ENCODE measurements at regions of chr5 and their contacts with region 1.

Region 1: DNA sequence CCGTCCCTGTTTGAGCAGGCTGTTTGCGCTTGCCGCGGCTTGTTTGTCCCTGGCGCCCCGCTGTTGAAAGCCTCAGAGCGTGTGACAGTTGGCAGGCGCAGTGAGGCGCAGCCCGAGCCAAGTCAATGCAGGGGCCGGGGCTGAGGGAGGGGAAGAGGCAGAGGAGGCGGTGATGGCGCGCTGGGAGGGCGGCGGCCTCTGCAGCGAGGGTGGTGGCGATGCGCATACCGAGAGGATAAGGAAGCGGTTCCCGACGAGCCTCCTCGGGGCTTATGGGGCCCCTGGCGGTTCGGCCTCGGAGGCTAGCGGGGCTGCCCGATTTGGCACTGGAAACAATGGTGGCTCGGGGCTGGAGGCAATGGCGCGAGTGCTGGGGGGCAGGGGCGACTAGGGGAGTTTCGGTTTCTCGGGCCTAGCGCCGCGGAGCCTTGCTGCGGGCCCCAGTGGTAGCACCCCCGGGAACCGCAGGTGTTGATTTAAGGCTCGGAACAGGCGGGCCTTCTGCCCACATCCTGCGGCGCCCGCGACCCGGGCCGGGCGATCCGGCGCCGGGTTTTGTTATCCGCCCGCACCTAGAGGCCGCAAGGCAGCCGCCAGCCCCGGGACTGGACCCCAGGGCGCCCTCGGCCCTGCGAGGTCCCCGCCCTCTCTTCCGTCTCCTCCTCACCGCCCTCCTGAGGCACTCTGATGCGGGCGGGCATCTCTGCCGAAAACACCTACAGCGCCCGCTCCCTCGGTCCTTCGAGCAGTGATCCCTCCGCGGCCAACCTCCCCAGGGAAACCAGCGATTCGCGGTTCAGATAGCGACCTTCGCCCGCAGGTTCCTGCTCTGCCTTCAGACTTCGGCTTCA is 947 bp upstream of the LNPEP start:
- DNase-seq: peak; percentile 95
- H3K4me3 ChIP-seq: peak overlapping the region; percentile 93 to 95 (median 94)
- H3K27ac ChIP-seq: peak overlapping the region; percentile 91 to 99 (median 98)
- H3K4me1 ChIP-seq: peaks cover 10 to 42% (median 30%) of the 10 kb centered on the region in 4 donors
- H3K27me3 ChIP-seq: no peaks in the 10 kb centered on the region
- CTCF ChIP-seq: peak in 2 of 4 experiments; percentile 13 to 19
- EP300 ChIP-seq: peak in 2 of 4 donors; percentile 33 to 40
- POLR2A ChIP-seq: peak in 1 of 2 donors; percentile 3

Region 2: GRCh38 chr5:96702503-96703383 is 232.2 kb before region 1 on chr5:
- intact Hi-C with region 1: loop called (anchors 5 kb)
- DNase-seq: peak; percentile 98
- H3K4me3 ChIP-seq: peak overlapping the region; percentile 57 to 69 (median 63)
- H3K27ac ChIP-seq: peak overlapping the region; percentile 88 to 93 (median 90)
- H3K4me1 ChIP-seq: peaks cover 0 to 32% (median 20%) of the 10 kb centered on the region in 4 donors
- H3K27me3 ChIP-seq: no peaks in the 10 kb centered on the region
- CTCF ChIP-seq: no peak
- EP300 ChIP-seq: peak in 3 of 4 donors; percentile 37 to 95 (median 69)
- POLR2A ChIP-seq: peak; percentile 63 to 71

Region 3: DNA sequence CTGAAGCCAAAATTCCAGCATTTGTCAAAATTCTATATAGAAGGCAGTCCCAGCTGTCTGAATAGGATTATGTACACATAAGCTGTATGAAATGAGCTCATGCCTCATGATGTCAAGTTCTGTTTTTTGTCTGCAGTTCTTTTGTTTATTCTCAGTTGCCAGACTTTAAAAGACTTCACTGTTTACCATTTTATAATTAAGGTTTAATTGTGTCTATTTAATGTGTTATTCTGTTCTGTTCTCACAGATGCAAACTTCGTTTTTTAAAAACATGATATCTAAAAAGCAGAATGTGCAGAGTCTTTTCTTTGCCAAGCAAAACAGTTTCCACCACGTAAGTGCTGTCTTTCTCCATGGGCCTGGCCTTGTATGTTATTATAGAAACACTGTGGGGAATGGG is 158.3 kb before region 1 on chr5:
- intact Hi-C with region 1: no loop called
- DNase-seq: no peak
- H3K4me3 ChIP-seq: no peak overlapping the region
- H3K27ac ChIP-seq: peak overlapping the region in 3 of 4 donors; percentile 62 to 74 (median 71)
- H3K4me1 ChIP-seq: peaks cover 0 to 65% (median 50%) of the 10 kb centered on the region in 4 donors
- H3K27me3 ChIP-seq: no peaks in the 10 kb centered on the region
- CTCF ChIP-seq: no peak
- EP300 ChIP-seq: peak in 2 of 4 donors; percentile 4 to 28
- POLR2A ChIP-seq: no peak

Region 4: GRCh38 chr5:96876292-96876850 is 58.6 kb before region 1 on chr5 and contains the start of gene ERAP2:
- intact Hi-C with region 1: loop called (anchors 5 kb)
- DNase-seq: no peak
- H3K4me3 ChIP-seq: peak within 1 kb of the TSS; percentile 59 to 66 (median 62)
- H3K27ac ChIP-seq: peak within 1 kb of the TSS; percentile 70 to 78 (median 74)
- H3K4me1 ChIP-seq: peaks cover 0 to 15% (median 3%) of the 10 kb centered on the region in 4 donors
- H3K27me3 ChIP-seq: no peaks in the 10 kb centered on the region
- CTCF ChIP-seq: no peak
- EP300 ChIP-seq: no peak
- POLR2A ChIP-seq: no peak
- total RNA-seq, gene ERAP2: 7.7 to 10.7 (median 8.2) TPM

Region 5: GRCh38 chr5:97026721-97027120 is 91.8 kb after region 1 on chr5:
- intact Hi-C with region 1: no loop called
- DNase-seq: no peak
- H3K4me3 ChIP-seq: no peak overlapping the region
- H3K27ac ChIP-seq: no peak overlapping the region
- H3K4me1 ChIP-seq: peaks cover 0 to 12% (median 5%) of the 10 kb centered on the region in 4 donors
- H3K27me3 ChIP-seq: no peaks in the 10 kb centered on the region
- CTCF ChIP-seq: no peak
- EP300 ChIP-seq: no peak
- POLR2A ChIP-seq: no peak

Region 6: DNA sequence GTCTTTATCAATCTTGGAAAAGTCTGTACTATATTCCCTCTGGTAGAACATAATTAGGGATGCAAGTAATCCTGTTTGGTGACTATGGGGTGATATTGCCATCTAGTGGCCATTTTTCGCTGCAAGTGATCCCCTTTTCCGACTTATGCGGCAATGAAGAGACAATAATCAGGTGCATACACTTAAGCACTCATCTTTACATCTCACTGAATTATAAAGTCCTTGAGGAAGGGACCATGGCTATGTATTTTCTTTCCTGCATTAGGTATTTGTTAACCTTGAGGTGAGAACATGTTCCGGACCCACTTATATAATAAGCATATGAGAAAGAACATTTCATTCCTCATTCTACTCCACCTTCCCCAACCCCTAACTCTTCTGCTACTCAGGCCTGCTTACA is 227.1 kb after region 1 on chr5:
- intact Hi-C with region 1: loop called (anchors 5 kb)
- DNase-seq: peak; percentile 76
- H3K4me3 ChIP-seq: no peak overlapping the region
- H3K27ac ChIP-seq: no peak overlapping the region
- H3K4me1 ChIP-seq: no peaks in the 10 kb centered on the region
- H3K27me3 ChIP-seq: no peaks in the 10 kb centered on the region
- CTCF ChIP-seq: peak; percentile 78 to 91 (median 81)
- EP300 ChIP-seq: no peak
- POLR2A ChIP-seq: no peak

Region 7: DNA sequence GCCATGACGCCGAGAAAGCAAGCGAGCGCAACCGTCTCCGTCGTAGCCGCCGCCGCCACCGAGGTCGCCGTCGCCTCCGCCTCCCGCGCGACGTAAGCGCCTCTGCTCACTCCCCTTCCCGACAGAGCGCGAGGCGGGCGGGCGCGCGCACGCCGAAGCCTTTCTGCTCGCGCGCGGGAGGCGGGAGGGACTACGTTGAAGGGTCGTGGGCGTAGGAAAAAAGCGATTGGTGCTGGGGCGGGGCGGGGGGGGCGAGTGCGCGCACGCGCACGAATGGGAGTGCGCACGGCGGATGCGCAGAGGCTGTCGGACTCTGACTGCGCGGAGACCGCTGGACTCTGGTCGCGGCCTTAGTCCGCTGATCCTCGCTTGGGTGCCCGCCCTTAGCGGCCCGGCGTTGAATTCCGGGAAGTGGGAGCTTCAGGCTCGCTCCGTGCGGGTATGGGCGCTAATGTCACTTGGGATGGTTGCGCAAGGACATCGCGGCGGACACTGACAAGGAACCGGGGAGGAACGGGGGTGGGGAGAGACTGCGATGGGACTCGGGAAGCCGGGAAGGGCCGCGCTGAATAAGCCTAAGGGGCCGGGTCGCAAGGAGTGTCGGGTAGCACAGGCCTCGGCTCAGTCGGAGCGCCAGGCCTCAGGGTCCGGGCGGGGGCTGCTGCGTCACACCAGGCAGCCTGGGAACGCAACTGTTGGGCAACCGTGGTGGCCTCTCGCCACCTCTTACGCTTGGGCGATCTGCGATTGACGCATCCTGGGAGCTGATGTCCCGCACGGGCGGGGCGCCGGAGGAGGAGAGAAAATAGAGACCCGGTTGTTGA is 1994.2 kb after region 1 on chr5 and contains the start of gene CHD1:
- intact Hi-C with region 1: loop called (anchors 2 kb)
- DNase-seq: peak; percentile 98
- H3K4me3 ChIP-seq: peak within 1 kb of the TSS; percentile 78 to 86 (median 84)
- H3K27ac ChIP-seq: peak within 1 kb of the TSS; percentile 99 to 100 (median 100)
- H3K4me1 ChIP-seq: peaks cover 0 to 44% (median 26%) of the 10 kb centered on the region in 4 donors
- H3K27me3 ChIP-seq: no peaks in the 10 kb centered on the region
- CTCF ChIP-seq: no peak
- EP300 ChIP-seq: peak; percentile 12 to 91 (median 80)
- POLR2A ChIP-seq: peak; percentile 96 to 97
- total RNA-seq, gene CHD1: 38.2 to 73.3 (median 52.4) TPM

Measured in sigmoid colon (tissue), 7 donors.